Activated B cell treated with CpG ODN at 0.5 μM for 24 hours (primary cell): ENCODE measurements at regions of chrX and their contacts with region 1.

Region 1: DNA sequence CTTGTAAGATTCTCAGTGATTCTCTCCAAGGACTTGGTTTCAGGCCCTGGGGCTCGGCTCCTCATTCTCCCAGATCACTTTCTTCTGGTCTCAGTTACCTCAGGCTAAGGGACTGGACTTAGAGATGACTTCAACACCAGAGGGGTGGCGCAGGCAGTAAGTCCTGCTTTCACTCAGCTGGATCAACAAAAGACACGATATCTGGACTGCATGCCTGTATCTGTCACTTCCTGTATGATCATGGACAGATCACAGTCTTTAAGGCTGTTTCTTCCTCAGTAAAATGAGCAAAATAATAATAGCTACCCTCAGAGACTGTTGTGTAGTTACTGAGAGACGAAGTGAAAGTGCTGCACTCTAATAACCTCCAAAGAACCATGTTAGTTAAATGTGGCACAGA is 19.5 kb upstream of the CXCR3 start:
- DNase-seq: no peak
- ATAC-seq: no peak
- H3K4me3 Mint-ChIP-seq: no peak overlapping the region
- H3K27ac Mint-ChIP-seq: no peak overlapping the region
- H3K4me1 Mint-ChIP-seq: peaks cover 16% of the 10 kb centered on the region
- H3K27me3 Mint-ChIP-seq: no peaks in the 10 kb centered on the region
- CTCF ChIP-seq: no peak

Region 2: DNA sequence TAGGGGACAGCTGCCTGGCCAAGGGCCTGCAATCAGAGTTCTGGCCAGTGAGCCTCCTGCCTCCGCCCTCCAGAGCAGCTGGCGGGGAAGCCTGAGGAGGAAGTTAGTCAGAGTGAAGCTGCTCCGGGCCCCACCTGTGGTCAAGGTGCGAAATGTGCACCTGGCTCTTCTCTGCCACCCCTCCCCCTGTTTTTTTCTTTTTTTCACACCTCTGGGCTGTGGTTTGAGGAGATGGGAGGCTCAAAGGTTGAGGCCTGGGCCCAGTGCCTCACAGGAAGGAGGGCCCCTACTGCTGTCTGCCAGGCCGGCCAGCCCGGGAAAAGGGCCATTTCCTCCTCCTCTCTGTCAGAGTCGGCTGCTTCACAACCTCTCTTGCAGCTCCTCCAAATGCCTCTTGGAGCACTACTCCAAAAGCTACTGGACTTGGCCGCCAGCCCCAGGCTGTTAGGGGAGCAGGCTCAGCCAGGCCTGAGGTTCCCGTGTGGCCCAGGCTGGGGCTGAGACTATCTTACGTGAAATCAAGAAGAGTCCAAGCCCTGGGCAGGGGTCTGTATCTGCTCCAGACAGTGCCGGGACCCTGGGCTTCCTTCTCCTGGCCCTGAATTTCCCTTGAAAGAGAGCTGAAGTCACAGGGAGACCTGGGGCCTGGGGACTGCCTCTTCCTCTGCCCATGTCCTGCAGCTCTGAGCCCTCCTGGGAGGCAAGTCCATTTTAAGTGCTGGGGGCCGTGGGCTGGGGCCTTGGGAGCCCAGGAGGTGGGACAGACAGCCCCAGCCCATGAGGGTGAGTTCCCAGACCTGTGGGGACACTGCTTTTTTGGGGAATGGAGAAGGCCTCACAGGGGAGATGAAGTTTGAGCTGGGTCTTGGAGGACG is 15.0 kb before region 1 on chrX:
- CTCF ChIA-PET with region 1: no interaction called
- POLR2A ChIA-PET with region 1: interaction called, 12 read pairs
- intact Hi-C with region 1: loop called (anchors 2 kb)
- DNase-seq: peak; percentile 25
- ATAC-seq: peak; percentile 45
- H3K4me3 Mint-ChIP-seq: peak overlapping the region; percentile 57
- H3K27ac Mint-ChIP-seq: peak overlapping the region; percentile 73
- H3K4me1 Mint-ChIP-seq: peaks cover 63% of the 10 kb centered on the region
- H3K27me3 Mint-ChIP-seq: no peaks in the 10 kb centered on the region
- CTCF ChIP-seq: no peak